Transverse colon (tissue), 4 donors: ENCODE measurements at regions of chr4 and their contacts with region 1.

Region 1: DNA sequence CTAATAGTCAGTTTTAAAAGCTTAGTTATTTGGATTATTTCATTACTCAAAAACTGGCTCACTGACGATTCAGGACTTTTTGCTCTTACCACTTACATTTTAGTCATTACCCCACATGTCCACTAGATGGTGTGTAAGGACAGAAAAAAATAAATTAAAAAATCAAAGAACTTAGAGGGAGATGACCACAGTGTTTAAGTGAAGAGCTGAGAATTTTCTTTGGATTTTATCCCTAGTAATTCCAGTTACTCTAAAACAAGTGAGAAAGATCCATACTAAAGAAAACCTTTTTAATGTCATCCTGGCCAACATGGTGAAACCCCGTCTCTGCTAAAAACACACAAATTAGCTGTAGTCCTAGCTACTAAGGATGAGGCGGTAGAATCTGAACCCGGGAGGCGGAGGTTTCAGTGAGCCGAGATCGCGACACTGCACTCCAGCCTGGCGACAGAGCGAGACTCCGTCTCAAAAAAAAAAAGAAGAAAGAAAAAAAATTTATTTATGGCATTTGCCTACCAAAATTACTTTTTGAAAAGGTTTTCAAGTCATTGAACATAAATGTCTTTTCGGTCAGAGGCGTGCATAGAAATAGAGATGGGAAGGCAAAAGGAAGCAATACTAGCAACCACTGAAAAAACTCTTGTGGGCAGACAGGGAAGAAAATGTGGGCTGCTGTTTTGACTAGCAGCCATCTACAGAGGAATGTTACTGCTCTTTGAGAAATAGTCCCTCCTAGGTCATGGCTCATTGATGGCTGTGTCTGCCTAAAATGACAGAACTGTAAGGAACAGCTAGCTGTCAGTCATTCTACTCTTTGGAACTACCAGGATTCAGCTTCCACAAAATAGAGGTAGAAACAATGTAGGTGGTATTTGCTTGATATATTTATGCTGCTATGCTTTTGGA is 26.6 kb upstream of the TMPRSS11B start:
- DNase-seq: no peak
- H3K4me3 ChIP-seq: no peak overlapping the region
- H3K27ac ChIP-seq: no peak overlapping the region
- H3K4me1 ChIP-seq: no peaks in the 10 kb centered on the region
- H3K27me3 ChIP-seq: no peaks in the 10 kb centered on the region
- CTCF ChIP-seq: peak; percentile 69 to 79 (median 75)
- EP300 ChIP-seq: no peak
- POLR2A ChIP-seq: no peak

Region 2: GRCh38 chr4:68152411-68152810 is 119.7 kb before region 1 on chr4:
- in situ Hi-C with region 1: no loop called
- intact Hi-C with region 1: no loop called
- DNase-seq: no peak
- H3K4me3 ChIP-seq: no peak overlapping the region
- H3K27ac ChIP-seq: no peak overlapping the region
- H3K4me1 ChIP-seq: no peaks in the 10 kb centered on the region
- H3K27me3 ChIP-seq: no peaks in the 10 kb centered on the region
- CTCF ChIP-seq: no peak
- EP300 ChIP-seq: no peak
- POLR2A ChIP-seq: no peak

Region 3: DNA sequence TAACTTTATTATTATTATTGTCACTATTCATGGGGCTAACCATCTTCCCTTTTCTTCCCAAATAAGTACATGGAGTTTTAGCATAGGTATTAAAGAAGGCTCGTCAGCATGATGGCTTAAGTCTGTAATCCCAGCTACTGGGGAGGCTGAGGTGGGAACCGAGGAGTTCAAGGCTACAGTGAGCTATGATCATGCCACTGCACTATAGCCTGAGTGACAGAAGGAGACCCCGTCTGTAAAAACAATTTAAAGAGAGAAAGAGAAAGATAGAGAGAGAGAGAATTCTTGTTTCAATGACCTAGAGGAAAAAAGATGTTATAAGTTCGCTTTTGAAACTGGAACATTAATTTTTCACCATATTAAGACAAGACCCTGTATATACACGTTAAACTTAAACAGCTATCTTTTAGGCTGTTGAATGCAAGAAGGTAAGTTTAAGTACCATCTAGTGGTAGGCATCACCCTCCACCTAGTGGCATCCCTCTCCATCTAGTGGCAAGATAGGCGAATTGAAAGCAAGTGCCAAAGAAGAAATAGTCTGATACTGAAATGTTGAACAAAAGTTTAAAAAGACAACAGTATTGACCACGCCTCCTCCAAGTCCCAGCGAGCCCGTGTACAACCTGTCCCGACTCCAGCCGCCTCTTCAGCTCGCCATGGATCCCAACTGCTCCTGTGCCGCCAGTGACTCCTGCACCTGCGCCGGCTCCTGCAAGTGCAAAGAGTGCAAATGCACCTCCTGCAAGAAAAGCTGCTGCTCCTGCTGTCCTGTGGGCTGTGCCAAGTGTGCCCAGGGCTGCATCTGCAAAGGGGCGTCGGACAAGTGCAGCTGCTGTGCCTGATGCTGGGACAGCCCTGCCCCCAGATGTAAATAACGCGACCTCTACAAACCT is 103.8 kb after region 1 on chr4:
- in situ Hi-C with region 1: loop called in 3 of 4 experiments (anchors 5 to 10 kb)
- intact Hi-C with region 1: loop called (anchors 5 kb)
- DNase-seq: peak; percentile 28
- H3K4me3 ChIP-seq: peak overlapping the region in 2 of 4 donors; percentile 14 to 22
- H3K27ac ChIP-seq: no peak overlapping the region
- H3K4me1 ChIP-seq: no peaks in the 10 kb centered on the region
- H3K27me3 ChIP-seq: no peaks in the 10 kb centered on the region
- CTCF ChIP-seq: peak; percentile 68 to 78 (median 76)
- EP300 ChIP-seq: no peak
- POLR2A ChIP-seq: no peak